Gastrocnemius medialis (tissue), 4 donors: ENCODE measurements at regions of chr3 and their contacts with region 1.

Region 1: GRCh38 chr3:52339612-52340011 is 23.5 kb downstream of the DNAH1 start:
- DNase-seq: no peak
- ATAC-seq: peak; percentile 69 to 91
- H3K4me3 ChIP-seq: no peak overlapping the region
- H3K27ac ChIP-seq: no peak overlapping the region
- H3K4me1 ChIP-seq: no peaks in the 10 kb centered on the region
- H3K27me3 ChIP-seq: no peaks in the 10 kb centered on the region
- CTCF ChIP-seq: peak; percentile 57 to 75 (median 70)
- POLR2A ChIP-seq: no peak

Region 2: GRCh38 chr3:51759203-51759602 is 580.4 kb before region 1 on chr3:
- in situ Hi-C with region 1: no loop called
- intact Hi-C with region 1: no loop called
- DNase-seq: no peak
- ATAC-seq: no peak
- H3K4me3 ChIP-seq: no peak overlapping the region
- H3K27ac ChIP-seq: no peak overlapping the region
- H3K4me1 ChIP-seq: no peaks in the 10 kb centered on the region
- H3K27me3 ChIP-seq: peaks cover 0 to 7% (median 4%) of the 10 kb centered on the region in 3 donors
- CTCF ChIP-seq: no peak
- POLR2A ChIP-seq: no peak

Region 3: GRCh38 chr3:52001443-52001974 is 338.1 kb before region 1 on chr3:
- in situ Hi-C with region 1: no loop called
- intact Hi-C with region 1: loop called (anchors 10 kb)
- DNase-seq: peak; percentile 40 to 73
- ATAC-seq: peak; percentile 55 to 78
- H3K4me3 ChIP-seq: no peak overlapping the region
- H3K27ac ChIP-seq: no peak overlapping the region
- H3K4me1 ChIP-seq: peaks cover 21 to 29% of the 10 kb centered on the region in 2 donors
- H3K27me3 ChIP-seq: no peaks in the 10 kb centered on the region
- CTCF ChIP-seq: peak; percentile 86 to 98 (median 97)
- POLR2A ChIP-seq: no peak

Region 4: DNA sequence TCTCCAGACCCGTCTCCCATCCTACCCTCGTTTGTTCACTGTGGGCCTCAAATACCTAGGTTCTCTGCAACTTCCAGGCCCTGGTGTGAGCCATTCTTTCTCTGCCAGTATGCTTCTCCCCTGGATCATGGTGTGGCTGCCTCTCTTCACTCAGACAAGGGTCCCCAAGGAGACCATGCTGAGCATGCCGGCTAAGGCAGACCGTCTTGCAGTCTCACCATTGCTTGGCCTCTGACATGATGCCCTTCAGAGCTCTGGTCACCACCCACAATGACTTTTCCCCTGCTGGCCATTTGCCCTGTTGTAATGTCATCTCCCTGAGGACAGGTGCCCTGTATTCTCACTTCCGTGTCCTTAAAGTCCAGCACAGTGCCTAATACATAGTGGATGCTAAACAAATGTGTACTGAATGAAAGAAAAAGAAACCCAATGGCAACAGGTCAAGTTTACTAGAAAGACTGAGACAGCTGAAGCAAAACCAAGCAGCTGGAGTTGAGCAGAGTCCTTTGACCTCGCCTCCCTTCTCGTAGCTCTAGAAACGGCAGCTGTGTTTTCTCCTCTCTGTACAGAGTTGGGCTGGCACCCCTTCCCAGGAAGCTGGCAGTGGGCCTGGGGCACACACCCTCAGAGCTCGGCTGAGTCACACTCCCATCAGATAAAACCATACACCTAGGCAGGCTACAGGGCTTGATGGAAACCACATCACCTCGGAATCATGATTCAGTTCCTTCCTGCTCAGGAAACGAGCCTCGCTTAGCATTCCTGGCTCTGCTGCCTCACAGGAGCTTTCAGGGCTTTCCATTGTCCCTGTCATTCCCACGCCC is 122.8 kb before region 1 on chr3:
- in situ Hi-C with region 1: loop called in 2 of 4 experiments (anchors 5 kb)
- intact Hi-C with region 1: no loop called
- DNase-seq: peak; percentile 70 to 87
- ATAC-seq: peak; percentile 83 to 87
- H3K4me3 ChIP-seq: no peak overlapping the region
- H3K27ac ChIP-seq: peak overlapping the region; percentile 47 to 80 (median 66)
- H3K4me1 ChIP-seq: peaks cover 20 to 28% of the 10 kb centered on the region in 2 donors
- H3K27me3 ChIP-seq: no peaks in the 10 kb centered on the region
- CTCF ChIP-seq: no peak
- POLR2A ChIP-seq: no peak

Region 5: GRCh38 chr3:52231502-52232293 is 107.9 kb before region 1 on chr3:
- in situ Hi-C with region 1: loop called in 2 of 4 experiments (anchors 5 to 10 kb)
- intact Hi-C with region 1: loop called (anchors 1 kb)
- DNase-seq: peak; percentile 71 to 82
- ATAC-seq: peak; percentile 20 to 22
- H3K4me3 ChIP-seq: peak overlapping the region; percentile 70 to 83 (median 70)
- H3K27ac ChIP-seq: peak overlapping the region; percentile 99 to 100 (median 100)
- H3K4me1 ChIP-seq: peaks cover 36 to 43% of the 10 kb centered on the region in 2 donors
- H3K27me3 ChIP-seq: no peaks in the 10 kb centered on the region
- CTCF ChIP-seq: peak; percentile 89 to 99 (median 97)
- POLR2A ChIP-seq: no peak

Region 6: DNA sequence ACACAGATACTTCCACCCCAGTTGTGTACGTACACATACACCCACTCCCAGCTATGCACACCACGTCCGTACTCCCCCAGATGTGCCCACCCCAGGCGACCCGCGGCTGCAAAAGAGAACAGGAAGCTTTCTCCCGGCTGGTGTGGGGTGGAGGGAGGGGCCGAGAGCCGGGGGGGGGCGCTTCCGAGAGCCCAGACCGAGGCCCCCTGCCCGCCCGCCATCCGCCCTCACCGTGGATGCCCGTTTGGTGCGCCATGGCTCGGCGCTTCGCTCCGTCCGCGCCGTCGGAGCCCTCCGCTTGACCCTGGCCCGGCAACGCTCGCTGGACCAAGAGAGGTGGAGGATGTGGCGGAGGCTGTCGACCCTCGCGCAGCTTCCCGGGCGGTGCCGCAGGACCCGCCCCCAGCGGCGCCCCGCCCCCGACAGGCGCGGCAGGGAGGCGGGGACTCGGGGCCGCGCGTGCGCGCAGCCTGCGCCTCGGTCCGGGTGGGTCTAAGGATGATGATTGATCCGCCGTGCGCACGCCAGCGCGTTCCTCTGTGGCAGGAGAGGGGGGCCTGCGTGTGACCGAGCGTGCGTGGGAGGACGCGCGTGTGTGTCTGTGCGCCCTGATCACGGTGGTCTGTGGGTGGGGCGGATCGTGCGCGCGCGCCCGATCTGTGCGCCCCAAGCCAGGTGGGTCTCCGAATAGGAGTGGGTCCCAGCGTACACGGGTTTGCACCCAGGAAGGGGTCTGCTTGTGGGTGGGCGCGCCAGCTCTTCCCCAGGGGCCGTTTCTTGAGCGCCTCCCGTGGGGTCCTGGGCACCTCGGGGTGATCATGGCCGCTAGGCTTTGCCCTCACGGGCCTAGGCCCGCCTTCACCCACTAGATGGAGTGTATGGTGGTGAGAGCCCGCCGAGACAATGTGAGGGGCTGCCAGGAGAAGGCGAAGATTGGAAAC is 100.6 kb before region 1 on chr3 and contains the start of gene TWF2:
- in situ Hi-C with region 1: loop called in 2 of 4 experiments (anchors 5 to 10 kb)
- intact Hi-C with region 1: no loop called
- DNase-seq: peak; percentile 45 to 59
- ATAC-seq: peak; percentile 20 to 28
- H3K4me3 ChIP-seq: peak within 1 kb of the TSS; percentile 72 to 95 (median 90)
- H3K27ac ChIP-seq: peak within 1 kb of the TSS; percentile 99 to 100 (median 100)
- H3K4me1 ChIP-seq: peaks cover 50 to 54% of the 10 kb centered on the region in 2 donors
- H3K27me3 ChIP-seq: no peaks in the 10 kb centered on the region
- CTCF ChIP-seq: peak in 4 of 5 experiments; percentile 31 to 60 (median 36)
- POLR2A ChIP-seq: peak; percentile 76 to 81
- total RNA-seq, gene TWF2: 99.2 to 222 (median 168) TPM

Region 7: DNA sequence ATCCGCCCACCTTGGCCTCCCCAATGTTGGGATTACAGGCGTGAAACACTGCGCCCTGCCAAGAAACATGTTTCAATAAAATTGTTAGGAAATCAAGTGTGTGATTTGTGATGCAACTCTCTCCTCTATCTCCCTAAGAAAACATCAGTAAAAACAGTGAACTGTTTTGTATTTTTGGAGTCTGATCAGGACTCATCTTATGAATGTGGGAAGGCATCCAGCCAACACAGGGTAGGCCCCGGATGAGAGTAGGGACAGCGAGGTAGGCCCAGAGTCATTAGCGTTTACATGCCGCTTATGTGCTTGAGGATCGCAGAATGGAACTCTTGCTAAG is 52.9 kb before region 1 on chr3:
- in situ Hi-C with region 1: no loop called
- intact Hi-C with region 1: loop called (anchors 5 kb)
- DNase-seq: no peak
- ATAC-seq: no peak
- H3K4me3 ChIP-seq: peak overlapping the region; percentile 72 to 95 (median 92)
- H3K27ac ChIP-seq: peak overlapping the region; percentile 96 to 100 (median 98)
- H3K4me1 ChIP-seq: peaks cover 12 to 14% of the 10 kb centered on the region in 2 donors
- H3K27me3 ChIP-seq: no peaks in the 10 kb centered on the region
- CTCF ChIP-seq: no peak
- POLR2A ChIP-seq: no peak

Region 8: DNA sequence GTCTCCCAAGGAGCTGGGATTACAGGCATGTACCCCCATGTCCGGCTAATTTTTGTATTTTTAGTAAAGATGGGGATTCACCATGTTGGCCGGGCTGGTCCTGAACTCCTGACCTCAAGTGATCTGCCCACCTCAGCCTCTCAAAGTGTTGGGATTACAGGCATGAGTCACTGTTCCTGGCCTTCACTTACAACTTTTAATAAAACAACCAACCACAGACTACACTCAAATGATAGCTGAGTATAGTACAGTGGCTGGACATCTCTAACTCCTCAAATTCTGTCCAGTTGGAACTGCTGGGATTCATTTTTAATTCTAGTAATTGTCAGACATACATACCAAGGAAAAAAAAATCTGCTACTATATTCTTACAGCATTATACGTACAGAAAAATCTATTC is 275.1 kb after region 1 on chr3:
- in situ Hi-C with region 1: no loop called
- intact Hi-C with region 1: no loop called
- DNase-seq: no peak
- ATAC-seq: no peak
- H3K4me3 ChIP-seq: no peak overlapping the region
- H3K27ac ChIP-seq: no peak overlapping the region
- H3K4me1 ChIP-seq: no peaks in the 10 kb centered on the region
- H3K27me3 ChIP-seq: no peaks in the 10 kb centered on the region
- CTCF ChIP-seq: no peak
- POLR2A ChIP-seq: no peak

Region 9: GRCh38 chr3:52931889-52932288 is 592.3 kb after region 1 on chr3:
- in situ Hi-C with region 1: no loop called
- intact Hi-C with region 1: no loop called
- DNase-seq: no peak
- ATAC-seq: no peak
- H3K4me3 ChIP-seq: no peak overlapping the region
- H3K27ac ChIP-seq: no peak overlapping the region
- H3K4me1 ChIP-seq: no peaks in the 10 kb centered on the region
- H3K27me3 ChIP-seq: no peaks in the 10 kb centered on the region
- CTCF ChIP-seq: no peak
- POLR2A ChIP-seq: no peak